ENCODE measurements at regions of chr11 and their contacts with region 1.

Region 1: GRCh38 chr11:86218125-86219084 is 26.1 kb upstream of the EED start:
- DNase-seq: peak; percentile 64
- ATAC-seq: peak; percentile 96
- H3K4me3 ChIP-seq: peak overlapping the region in 2 of 3 experiments; percentile 24 to 31; a peak in 4 of 6 replicates
- H3K27ac ChIP-seq: no peak overlapping the region
- H3K4me1 ChIP-seq: peaks cover 13% of the 10 kb centered on the region
- H3K27me3 ChIP-seq: no peaks in the 10 kb centered on the region; a peak in 2 of 5 replicates
- CTCF ChIP-seq: peak; percentile 83
- EP300 ChIP-seq: no peak
- POLR2A ChIP-seq: no peak
- RAD21 ChIP-seq: peak; percentile 77

Region 2: DNA sequence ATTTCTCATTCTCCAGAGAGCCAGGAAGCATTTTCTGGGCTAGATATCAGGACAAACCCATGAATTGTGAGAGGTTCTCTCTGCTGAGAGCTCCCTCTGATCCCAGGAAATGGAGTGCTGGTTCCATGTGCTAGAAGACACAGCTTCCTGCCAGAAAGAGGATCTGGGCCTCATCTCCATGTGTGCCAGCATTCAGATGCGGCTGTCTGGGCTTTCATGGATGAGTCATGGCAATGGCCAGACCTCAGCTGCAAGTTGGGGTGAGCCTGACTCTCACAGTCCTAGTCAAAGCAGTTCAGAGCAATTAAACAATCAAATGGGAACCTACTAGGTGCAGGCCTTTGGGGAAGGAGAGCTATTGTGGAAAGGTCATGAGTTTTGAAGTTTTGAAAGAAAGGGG is 56.2 kb before region 1 on chr11:
- CTCF ChIA-PET with region 1: no interaction called
- POLR2A ChIA-PET with region 1: no interaction called
- in situ Hi-C with region 1: no loop called
- intact Hi-C with region 1: no loop called
- DNase-seq: no peak
- ATAC-seq: peak; percentile 47; the same call in 2 of the 3 replicates
- H3K4me3 ChIP-seq: no peak overlapping the region
- H3K27ac ChIP-seq: no peak overlapping the region
- H3K4me1 ChIP-seq: peaks cover 31% of the 10 kb centered on the region
- H3K27me3 ChIP-seq: no peaks in the 10 kb centered on the region
- CTCF ChIP-seq: no peak
- EP300 ChIP-seq: no peak
- POLR2A ChIP-seq: no peak
- RAD21 ChIP-seq: no peak

Region 3: DNA sequence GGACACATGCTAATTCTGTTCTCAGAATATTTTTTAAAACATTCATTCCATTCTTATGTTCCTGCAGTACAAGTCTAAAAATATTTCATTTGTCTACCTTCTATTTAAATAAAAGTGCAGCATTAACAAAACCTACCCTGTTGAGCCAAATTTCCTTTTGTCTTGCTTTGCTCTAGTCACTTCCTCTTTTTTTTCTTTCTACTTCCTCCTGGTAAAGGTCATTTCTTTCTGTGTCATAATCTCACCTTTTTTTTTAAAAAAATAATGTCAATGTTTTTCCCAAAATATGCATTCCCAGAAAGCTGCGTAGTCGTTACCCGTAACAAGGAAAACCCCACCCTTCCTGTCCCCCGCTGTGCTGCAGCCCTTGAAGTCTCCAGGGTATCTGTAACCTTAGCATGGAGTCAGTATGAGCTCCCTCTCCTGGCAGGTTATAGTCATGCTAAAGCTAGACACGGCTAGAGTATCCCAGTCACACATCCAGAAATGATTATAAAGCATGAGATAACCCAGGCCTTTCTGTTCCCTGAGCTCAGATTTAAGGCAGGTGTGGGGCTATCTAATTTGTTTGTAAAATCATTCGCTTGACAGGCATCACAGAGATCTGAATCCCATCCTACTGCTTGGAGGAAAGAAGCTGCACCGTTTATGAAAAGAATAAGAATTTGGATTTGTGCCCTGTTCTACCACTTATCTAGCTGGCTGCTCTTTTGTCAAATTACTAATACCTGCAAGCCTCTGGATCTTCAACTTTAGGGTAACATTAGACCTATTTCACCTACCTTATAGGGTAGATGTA is 24.9 kb before region 1 on chr11:
- CTCF ChIA-PET with region 1: interaction called, 15 read pairs
- POLR2A ChIA-PET with region 1: interaction called, 3 read pairs
- in situ Hi-C with region 1: no loop called
- intact Hi-C with region 1: no loop called
- DNase-seq: peak; percentile 76
- ATAC-seq: peak; percentile 100
- H3K4me3 ChIP-seq: peak overlapping the region in 2 of 3 experiments; percentile 21; a peak in 2 of 6 replicates
- H3K27ac ChIP-seq: no peak overlapping the region
- H3K4me1 ChIP-seq: peaks cover 9% of the 10 kb centered on the region; the same call in 1 of the 2 replicates
- H3K27me3 ChIP-seq: no peaks in the 10 kb centered on the region
- CTCF ChIP-seq: peak; percentile 85
- EP300 ChIP-seq: no peak
- POLR2A ChIP-seq: no peak
- RAD21 ChIP-seq: peak; percentile 65; the same call in 1 of the 2 replicates

Region 4: DNA sequence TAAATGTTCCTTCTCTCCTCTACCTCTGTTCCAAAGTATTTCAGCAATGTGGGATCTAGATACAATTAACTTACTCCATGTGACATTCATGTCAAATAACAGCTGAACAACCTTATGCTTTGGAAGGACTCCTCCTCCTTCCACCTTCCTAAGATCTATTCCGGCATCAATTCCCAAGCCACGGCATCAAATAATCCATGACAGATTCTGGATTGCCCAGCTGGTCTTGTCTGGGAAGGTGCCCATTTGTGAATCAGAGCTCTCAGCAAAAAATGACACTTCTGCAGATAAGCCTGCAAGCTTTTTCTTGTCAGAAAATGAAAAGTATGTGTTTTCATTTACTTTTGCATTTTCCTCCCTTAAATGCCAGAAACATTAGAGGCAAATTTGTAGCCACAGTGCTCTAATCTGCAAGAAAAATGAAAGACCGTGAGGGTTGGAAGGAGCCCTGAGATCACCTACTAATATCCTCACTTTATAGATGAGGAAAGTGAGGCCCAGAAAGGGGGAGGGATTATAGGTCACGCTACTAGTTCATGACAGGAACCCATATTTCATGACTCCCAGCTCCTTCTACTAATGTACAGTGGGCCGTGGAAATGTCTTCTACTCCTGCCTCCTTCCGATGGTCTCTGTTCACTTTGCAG is 330.0 kb after region 1 on chr11:
- CTCF ChIA-PET with region 1: no interaction called
- POLR2A ChIA-PET with region 1: no interaction called
- in situ Hi-C with region 1: no loop called
- intact Hi-C with region 1: no loop called
- DNase-seq: no peak
- ATAC-seq: no peak
- H3K4me3 ChIP-seq: no peak overlapping the region
- H3K27ac ChIP-seq: no peak overlapping the region
- H3K4me1 ChIP-seq: peaks cover 17% of the 10 kb centered on the region
- H3K27me3 ChIP-seq: peaks cover 2 to 13% of the 10 kb centered on the region in 2 experiments; a peak in 3 of 5 replicates
- CTCF ChIP-seq: no peak
- EP300 ChIP-seq: no peak
- POLR2A ChIP-seq: no peak
- RAD21 ChIP-seq: no peak

Measured in HepG2 (cell line).